Posterior cingulate gyrus (tissue), 11 donors: ENCODE measurements at regions of chr2 and their contacts with region 1.

Region 1: DNA sequence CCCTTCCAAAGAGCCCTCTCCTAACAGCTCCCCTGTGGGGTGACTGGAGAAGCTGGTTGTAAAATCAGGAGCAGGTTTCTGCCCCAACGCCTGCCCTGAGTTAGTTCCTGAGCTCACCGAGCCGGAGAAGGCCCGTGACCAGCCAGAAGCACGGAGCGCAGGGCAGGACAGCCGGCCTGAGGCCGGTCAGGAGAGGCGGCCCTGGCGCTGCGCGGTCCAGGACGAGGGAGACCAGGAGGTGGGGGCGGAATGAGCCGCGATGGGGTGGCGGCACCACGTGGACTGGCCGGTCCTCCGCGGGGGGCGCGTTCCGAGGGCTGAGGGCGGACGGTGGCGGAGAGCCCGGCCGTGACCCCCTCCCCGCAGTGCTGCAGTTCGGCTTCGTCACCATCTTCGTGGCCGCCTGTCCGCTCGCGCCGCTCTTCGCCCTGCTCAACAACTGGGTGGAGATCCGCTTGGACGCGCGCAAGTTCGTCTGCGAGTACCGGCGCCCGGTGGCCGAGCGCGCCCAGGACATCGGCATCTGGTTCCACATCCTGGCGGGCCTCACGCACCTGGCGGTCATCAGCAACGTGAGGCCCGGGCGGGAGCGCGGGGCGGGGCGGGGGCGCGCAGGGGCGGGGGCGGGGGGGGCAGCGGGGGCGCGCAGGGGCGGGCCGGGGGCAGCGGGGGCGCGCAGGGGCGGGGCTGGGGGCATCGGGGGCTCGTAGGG is 29.0 kb downstream of the ANO7 start:
- DNase-seq: peak; percentile 44 to 95 (median 66)

Region 2: GRCh38 chr2:241069821-241070281 is 147.6 kb before region 1 on chr2:
- intact Hi-C with region 1: loop called (anchors 10 kb)
- DNase-seq: peak in 3 of 10 donors; percentile 69 to 82 (median 82)

Region 3: GRCh38 chr2:241255542-241256167 is 38.2 kb after region 1 on chr2:
- intact Hi-C with region 1: no loop called
- DNase-seq: peak in 3 of 10 donors; percentile 35 to 86 (median 47)

Region 4: GRCh38 chr2:241315093-241315878 is 97.8 kb after region 1 on chr2 and contains the start of gene HDLBP:
- intact Hi-C with region 1: loop called (anchors 2 kb)
- DNase-seq: peak; percentile 96 to 99 (median 98)